ENCODE measurements at regions of chr5 and their contacts with region 1.

Region 1: GRCh38 chr5:132688536-132689339 is 14.9 kb downstream of the IL4 start:
- DNase-seq: no peak
- ATAC-seq: no peak
- H3K4me3 Mint-ChIP-seq: peak overlapping the region; percentile 48
- H3K27ac Mint-ChIP-seq: peak overlapping the region; percentile 88
- H3K4me1 Mint-ChIP-seq: peaks cover 44% of the 10 kb centered on the region
- H3K27me3 Mint-ChIP-seq: no peaks in the 10 kb centered on the region

Region 2: DNA sequence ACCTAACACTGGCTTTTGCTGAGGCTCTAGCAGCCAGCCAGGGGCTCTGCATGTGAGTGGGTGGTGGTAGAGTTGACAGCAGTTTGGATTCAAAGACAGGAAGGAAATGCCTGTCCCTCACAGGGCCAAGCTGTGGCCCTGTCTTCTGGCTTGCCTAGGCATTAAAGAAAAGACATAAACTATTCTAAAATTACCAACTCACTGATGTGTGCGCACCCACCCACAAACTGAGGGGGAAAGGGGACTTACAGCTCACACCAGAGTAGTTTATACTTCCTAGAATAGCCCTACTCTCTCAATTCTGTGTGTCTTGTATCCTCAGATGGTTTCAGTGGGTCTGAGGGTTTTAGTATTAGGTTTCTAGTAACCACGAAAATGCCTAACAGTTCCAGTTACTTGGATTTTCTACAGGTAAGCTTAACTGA is 49.0 kb before region 1 on chr5:
- POLR2A ChIA-PET with region 1: interaction called, 13 read pairs
- DNase-seq: peak; percentile 50
- ATAC-seq: peak; percentile 78
- H3K4me3 Mint-ChIP-seq: peak overlapping the region; percentile 41
- H3K27ac Mint-ChIP-seq: peak overlapping the region; percentile 88
- H3K4me1 Mint-ChIP-seq: peaks cover 78% of the 10 kb centered on the region
- H3K27me3 Mint-ChIP-seq: no peaks in the 10 kb centered on the region

Region 3: DNA sequence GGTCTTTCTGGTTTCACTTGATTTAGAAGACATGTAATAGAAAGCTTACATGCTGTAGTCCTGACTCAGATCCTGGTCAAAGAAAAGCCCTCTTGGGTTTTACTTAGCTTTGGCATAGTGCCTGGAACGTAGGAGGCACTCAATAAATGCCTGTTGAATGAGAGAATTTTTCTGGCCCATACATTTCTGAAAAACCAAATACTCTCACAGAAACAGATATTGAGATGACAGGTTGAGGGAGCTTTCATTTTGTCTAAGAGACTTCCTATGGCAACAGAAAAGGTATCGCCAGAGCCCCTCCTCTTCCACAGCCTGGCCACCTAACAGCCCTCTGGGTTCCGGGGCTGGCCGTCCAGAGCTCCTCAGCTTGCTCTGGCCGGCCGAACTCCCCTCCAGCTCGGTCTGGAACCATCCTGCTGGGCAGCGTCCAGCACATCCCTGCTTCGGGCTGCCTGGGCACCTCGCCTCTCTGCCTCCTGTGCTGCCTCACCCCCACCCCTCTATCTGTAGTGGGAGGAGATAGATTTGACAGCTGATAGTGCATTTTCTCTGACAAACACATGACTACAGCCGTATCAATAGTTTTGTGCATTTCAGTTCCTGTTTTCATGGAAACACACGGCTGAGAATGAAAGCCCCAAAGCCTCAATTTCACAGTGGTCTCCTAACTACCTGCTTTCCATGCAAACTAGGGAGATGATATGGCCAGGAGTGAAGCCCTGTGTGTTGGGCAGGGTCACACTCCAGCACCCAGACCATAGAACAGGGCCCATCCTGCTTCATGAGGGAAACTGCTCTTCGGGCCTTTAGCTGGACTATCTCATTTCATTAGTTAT is 13.8 kb before region 1 on chr5:
- POLR2A ChIA-PET with region 1: interaction called, 30 read pairs
- DNase-seq: no peak
- ATAC-seq: peak; percentile 34
- H3K4me3 Mint-ChIP-seq: peak overlapping the region; percentile 35
- H3K27ac Mint-ChIP-seq: peak overlapping the region; percentile 77
- H3K4me1 Mint-ChIP-seq: peaks cover 34% of the 10 kb centered on the region
- H3K27me3 Mint-ChIP-seq: no peaks in the 10 kb centered on the region

Region 4: GRCh38 chr5:132787076-132787475 is 98.3 kb after region 1 on chr5:
- POLR2A ChIA-PET with region 1: no interaction called
- DNase-seq: no peak
- ATAC-seq: no peak
- H3K4me3 Mint-ChIP-seq: no peak overlapping the region
- H3K27ac Mint-ChIP-seq: no peak overlapping the region
- H3K4me1 Mint-ChIP-seq: peaks cover 6% of the 10 kb centered on the region
- H3K27me3 Mint-ChIP-seq: peaks cover 28% of the 10 kb centered on the region